CD8-positive, alpha-beta memory T cell (primary cell): ENCODE measurements at regions of chr7 and their contacts with region 1.

Region 1: DNA sequence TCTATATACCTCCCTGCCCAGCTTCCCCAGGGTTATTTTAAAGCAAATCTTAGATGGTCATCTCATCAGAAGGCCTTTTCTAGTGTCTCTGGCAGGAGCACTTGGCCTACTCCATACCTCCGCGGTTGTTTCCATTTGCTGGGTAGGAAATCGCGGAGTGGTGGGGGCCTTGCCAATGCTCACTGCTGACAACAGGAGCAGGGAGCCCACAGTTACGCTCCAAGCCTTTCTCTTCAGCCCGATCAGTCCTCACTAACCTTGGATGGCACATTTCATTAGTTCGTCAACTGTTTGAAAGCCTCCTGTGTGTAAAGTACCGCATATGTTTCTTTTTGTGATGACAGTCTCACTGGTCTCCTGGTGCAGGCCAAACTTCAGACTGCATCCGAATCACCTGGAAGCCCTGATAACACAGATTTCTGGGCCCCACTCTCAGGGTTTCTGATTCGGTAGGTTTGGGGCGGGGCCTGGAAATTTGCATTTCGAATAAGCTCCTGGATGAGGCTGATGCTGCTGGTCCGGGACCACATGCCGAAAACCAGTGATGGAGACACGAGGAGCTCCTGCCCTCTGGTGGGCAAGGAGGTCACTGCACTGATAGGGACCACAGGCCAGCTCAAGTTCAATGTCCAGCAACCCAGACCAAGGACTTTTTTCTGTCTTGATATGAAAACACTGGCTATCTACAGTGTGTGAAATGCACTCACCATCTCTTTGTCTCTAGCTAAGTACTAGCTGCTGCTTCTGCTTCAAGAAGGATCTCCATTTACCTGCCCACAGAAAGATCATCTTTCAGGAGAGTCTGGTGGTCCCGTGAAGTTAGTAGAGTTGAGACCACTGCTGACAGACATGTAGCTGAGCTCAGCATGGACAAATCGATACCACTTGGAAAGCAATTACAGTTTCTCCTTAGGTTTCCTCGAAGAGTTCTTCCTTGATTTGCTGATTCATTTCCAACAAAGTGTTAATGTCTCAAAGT is 14.0 kb downstream of the LRGUK start:
- DNase-seq: peak in 4 of 5 donors; percentile 7 to 52 (median 14)
- H3K4me3 ChIP-seq: no peak overlapping the region
- H3K4me3 Mint-ChIP-seq: peak overlapping the region in 3 of 7 donors; percentile 2 to 61 (median 33)
- H3K27ac ChIP-seq: no peak overlapping the region
- H3K27ac Mint-ChIP-seq: no peak overlapping the region
- H3K4me1 ChIP-seq: no peaks in the 10 kb centered on the region
- H3K4me1 Mint-ChIP-seq: peaks cover 0 to 3% (median 3%) of the 10 kb centered on the region in 3 donors
- H3K27me3 ChIP-seq: no peaks in the 10 kb centered on the region
- H3K27me3 Mint-ChIP-seq: peaks cover 0 to 7% of the 10 kb centered on the region in 2 donors

Region 2: DNA sequence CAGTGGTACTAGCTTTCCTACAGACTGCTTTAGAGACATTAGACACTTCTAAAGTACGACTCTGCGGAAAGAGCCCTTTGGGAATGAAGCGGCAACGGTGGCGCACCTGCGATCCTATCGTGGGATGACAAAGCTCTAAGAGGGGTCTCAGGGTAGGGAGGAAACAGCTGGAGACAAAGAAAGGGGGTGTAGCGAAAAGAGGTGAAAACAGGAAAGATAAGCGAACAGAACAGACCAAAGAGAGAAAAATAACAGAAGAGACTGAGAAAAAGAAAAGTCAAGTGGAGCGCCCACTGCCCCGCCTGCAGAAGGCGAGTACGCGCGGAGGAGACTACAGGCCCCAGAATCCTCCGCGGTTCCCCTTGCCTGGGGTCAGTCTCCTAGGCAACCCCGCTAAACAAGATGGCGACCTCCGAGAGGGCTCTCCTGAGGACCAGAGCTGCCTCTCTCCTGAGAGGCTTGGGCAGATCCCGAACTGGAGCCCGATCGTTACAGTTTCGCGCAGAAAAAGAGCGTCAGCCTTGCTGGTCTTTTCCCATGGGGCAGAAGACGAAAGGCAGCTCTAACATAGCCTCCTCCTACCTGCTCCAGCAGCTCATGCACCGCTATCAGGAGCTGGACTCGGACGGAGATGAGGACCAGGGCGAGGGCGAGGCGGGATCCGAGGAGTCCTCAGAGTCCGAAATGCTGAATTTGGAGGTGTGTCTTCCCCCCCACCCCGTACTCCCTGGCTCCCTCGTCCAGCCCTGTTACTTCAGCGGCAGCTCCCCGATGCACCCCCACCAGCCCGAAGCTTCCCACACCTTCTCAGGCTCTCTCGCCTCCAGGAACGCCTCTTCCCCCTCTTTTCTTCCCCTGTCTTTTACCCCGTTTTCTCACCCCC is 14.0 kb before region 1 on chr7 and contains the start of gene LRGUK:
- CTCF ChIA-PET with region 1: interaction called, 11 read pairs
- POLR2A ChIA-PET with region 1: no interaction called
- DNase-seq: peak; percentile 59 to 86 (median 75)
- H3K4me3 ChIP-seq: peak within 1 kb of the TSS; percentile 80
- H3K4me3 Mint-ChIP-seq: peak within 1 kb of the TSS; percentile 80 to 93 (median 87)
- H3K27ac ChIP-seq: no peak within 1 kb of the TSS
- H3K27ac Mint-ChIP-seq: peak within 1 kb of the TSS in 6 of 8 donors; percentile 24 to 64 (median 46)
- H3K4me1 ChIP-seq: peaks cover 9% of the 10 kb centered on the region
- H3K4me1 Mint-ChIP-seq: peaks cover 15 to 21% (median 19%) of the 10 kb centered on the region in 3 donors
- H3K27me3 ChIP-seq: peaks cover 7% of the 10 kb centered on the region
- H3K27me3 Mint-ChIP-seq: peaks cover 9 to 31% of the 10 kb centered on the region in 2 donors
- total RNA-seq, gene LRGUK: 0.18 to 0.31 TPM

Region 3: DNA sequence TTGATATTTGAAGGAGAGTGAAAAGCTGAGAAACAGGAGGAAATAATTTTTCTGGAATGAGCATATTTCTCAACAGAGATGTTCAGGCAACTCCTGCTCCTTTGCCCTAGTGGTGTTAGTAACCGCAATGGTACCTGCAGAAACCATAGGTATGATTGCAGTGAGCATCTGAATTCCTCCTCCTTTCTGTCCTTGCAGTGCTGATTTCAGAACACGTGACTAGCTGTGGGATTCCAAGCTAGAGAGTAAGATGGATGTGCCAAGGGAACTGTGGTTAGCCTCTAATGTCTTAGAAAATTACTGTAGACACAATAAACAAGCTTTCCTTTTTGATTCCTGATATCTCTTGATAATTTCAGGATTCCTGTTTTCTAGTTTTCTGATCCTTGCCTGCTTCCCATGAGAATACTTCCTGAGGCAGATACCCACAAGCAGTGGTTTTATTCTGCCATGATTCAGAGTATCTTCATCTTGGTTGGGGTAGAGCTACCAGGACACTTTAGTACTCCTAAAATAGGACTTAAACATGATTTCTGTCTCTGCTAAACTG is 13.5 kb after region 1 on chr7:
- CTCF ChIA-PET with region 1: interaction called, 11 read pairs
- POLR2A ChIA-PET with region 1: no interaction called
- DNase-seq: no peak
- H3K4me3 ChIP-seq: no peak overlapping the region
- H3K4me3 Mint-ChIP-seq: no peak overlapping the region
- H3K27ac ChIP-seq: no peak overlapping the region
- H3K27ac Mint-ChIP-seq: no peak overlapping the region
- H3K4me1 ChIP-seq: no peaks in the 10 kb centered on the region
- H3K4me1 Mint-ChIP-seq: no peaks in the 10 kb centered on the region
- H3K27me3 ChIP-seq: no peaks in the 10 kb centered on the region
- H3K27me3 Mint-ChIP-seq: peaks cover 0 to 3% of the 10 kb centered on the region in 2 donors